Activated B cell treated with CpG ODN at 0.5 μM for 24 hours (primary cell): ENCODE measurements at regions of chr10 and their contacts with region 1.

Region 1: DNA sequence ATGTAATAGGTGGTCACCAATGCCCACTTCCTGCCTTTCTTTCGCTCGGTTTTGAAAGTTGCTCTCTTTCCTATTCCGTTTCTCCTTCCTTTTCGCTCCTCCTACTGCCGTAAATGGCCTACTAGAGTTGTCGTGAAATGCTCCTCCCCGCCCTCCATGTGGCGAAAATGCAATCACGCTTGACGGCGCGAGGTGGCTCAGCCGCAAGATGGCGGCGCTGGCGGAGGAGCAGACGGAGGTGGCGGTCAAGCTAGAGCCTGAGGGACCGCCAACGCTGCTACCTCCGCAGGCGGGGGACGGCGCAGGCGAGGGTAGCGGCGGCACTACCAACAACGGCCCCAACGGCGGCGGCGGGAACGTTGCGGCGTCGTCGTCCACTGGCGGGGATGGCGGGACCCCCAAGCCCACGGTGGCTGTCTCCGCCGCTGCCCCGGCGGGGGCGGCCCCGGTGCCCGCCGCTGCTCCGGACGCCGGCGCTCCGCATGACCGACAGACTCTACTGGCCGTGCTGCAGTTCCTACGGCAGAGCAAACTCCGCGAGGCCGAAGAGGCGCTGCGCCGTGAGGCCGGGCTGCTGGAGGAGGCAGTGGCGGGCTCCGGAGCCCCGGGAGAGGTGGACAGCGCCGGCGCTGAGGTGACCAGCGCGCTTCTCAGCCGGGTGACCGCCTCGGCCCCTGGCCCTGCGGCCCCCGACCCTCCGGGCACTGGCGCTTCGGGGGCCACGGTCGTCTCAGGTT is at the start of gene TAF5:
- DNase-seq: peak; percentile 79
- ATAC-seq: peak; percentile 72
- H3K4me3 Mint-ChIP-seq: peak within 1 kb of the TSS; percentile 90
- H3K27ac Mint-ChIP-seq: peak within 1 kb of the TSS; percentile 87
- H3K4me1 Mint-ChIP-seq: peaks cover 12% of the 10 kb centered on the region
- H3K27me3 Mint-ChIP-seq: no peaks in the 10 kb centered on the region
- CTCF ChIP-seq: no peak
- total RNA-seq, gene TAF5: 3.6 and 3.8 TPM in 2 replicates

Region 2: GRCh38 chr10:102743588-102744373 is 624.2 kb before region 1 on chr10 and contains the start of gene WBP1L:
- CTCF ChIA-PET with region 1: no interaction called
- POLR2A ChIA-PET with region 1: interaction called, 5 read pairs
- intact Hi-C with region 1: loop called (anchors 1 kb)
- DNase-seq: peak; percentile 81
- ATAC-seq: peak; percentile 98
- H3K4me3 Mint-ChIP-seq: peak within 1 kb of the TSS; percentile 93
- H3K27ac Mint-ChIP-seq: peak within 1 kb of the TSS; percentile 87
- H3K4me1 Mint-ChIP-seq: peaks cover 47% of the 10 kb centered on the region
- H3K27me3 Mint-ChIP-seq: no peaks in the 10 kb centered on the region
- CTCF ChIP-seq: no peak
- total RNA-seq, gene WBP1L: 30.5 and 30.8 TPM in 2 replicates

Region 3: DNA sequence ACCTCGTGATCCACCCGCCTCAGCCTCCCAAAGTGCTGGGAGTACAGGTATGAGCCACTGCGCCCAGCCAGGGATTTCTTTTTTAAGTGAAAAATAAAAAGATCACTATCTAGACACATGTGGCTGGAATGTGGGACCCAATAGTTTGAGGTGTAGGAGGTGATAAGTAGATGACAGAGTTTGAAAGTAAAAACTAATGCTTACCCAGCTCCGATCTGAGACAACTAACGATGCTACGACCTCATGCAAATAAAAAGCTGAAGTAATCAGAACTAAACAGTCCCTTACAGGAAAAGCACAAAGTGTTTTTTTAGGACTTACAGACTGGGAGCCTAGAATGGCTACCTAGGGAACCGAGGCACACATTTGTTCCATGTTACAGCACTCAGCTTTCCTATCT is 40.0 kb before region 1 on chr10:
- CTCF ChIA-PET with region 1: no interaction called
- POLR2A ChIA-PET with region 1: no interaction called
- intact Hi-C with region 1: no loop called
- DNase-seq: no peak
- ATAC-seq: no peak
- H3K4me3 Mint-ChIP-seq: no peak overlapping the region
- H3K27ac Mint-ChIP-seq: no peak overlapping the region
- H3K4me1 Mint-ChIP-seq: no peaks in the 10 kb centered on the region
- H3K27me3 Mint-ChIP-seq: no peaks in the 10 kb centered on the region
- CTCF ChIP-seq: no peak

Region 4: DNA sequence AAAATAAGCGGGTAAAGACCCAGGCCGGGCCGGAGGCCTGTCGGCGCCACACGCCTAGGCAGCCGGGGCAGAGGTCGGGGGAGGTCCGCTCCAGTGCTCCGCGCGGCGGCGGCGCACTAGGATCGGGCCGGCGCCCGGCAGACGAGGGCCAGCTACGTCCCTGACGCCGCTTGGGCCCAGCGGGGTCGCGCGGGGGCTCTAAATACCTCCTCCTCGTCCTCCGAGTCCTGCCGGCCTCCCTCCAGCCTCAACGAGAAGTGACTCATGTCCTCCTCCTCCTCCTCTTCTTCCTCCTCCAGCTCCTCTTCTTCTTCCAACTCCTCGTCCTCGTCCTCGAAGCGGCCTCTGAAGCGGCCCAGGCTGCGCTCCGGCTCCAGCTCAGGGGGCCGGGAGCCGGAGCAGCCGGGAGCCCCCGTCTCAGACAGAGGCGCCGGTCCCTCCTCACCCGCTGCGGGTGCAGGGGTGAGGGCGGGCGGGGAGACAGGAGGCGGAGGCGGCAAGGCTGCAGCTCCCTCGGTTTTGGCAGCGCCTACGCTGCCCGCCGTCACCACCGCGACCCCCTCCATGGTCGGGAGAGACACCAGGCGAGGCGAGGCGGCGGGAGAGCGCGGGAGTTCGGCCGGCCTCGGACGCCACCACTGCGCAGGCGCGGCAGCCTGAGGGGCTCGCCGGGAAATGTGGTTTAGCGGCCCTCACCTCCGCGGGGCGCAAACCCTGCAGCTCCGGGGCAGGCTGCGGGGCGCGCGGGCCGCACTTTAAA is 17.3 kb before region 1 on chr10 and contains the start of gene PCGF6:
- CTCF ChIA-PET with region 1: no interaction called
- POLR2A ChIA-PET with region 1: interaction called, 26 read pairs
- intact Hi-C with region 1: loop called (anchors 1 kb)
- DNase-seq: peak; percentile 78
- ATAC-seq: peak; percentile 86
- H3K4me3 Mint-ChIP-seq: peak within 1 kb of the TSS; percentile 92
- H3K27ac Mint-ChIP-seq: peak within 1 kb of the TSS; percentile 82
- H3K4me1 Mint-ChIP-seq: peaks cover 10% of the 10 kb centered on the region
- H3K27me3 Mint-ChIP-seq: no peaks in the 10 kb centered on the region
- CTCF ChIP-seq: no peak
- total RNA-seq, gene PCGF6: 7.3 and 7.6 TPM in 2 replicates

Region 5: DNA sequence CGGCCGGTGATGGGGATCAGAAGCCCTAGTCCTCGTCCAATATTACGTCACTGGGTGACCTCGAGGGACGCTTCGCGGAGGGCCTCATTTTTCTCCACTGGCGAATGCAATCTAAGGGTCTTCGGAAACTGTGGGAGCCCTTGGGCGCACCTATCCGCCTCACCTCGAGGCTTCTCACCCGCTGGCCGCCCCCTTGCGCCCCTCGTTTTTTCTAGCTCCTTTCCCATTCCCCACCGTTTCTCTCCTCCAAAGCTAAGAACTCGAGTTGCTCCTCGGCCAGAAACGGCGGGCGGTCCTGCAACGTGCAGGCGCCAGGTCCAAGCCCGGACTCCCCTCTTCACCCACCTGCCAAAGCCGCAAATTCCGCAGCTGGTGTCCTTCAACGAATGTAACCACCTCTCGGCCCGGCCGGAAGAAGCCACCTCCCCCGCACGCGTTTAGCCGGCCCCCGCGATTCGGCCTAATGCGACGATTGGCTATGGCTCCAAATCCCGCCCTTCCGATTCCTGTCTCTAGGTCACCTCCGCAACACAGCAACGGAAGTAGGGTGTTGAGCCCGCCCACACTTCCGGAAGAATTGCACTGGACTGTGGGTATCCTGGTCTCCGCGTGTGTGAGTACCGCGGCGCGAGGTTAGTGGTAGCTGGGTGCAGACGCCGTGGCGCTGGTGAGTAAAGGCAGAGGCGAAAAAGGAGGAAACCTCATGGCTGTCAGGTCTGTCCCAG is 28.3 kb after region 1 on chr10 and contains the starts of genes ATP5MK and PDCD11:
- CTCF ChIA-PET with region 1: no interaction called
- POLR2A ChIA-PET with region 1: interaction called, 16 read pairs
- intact Hi-C with region 1: loop called (anchors 1 kb)
- DNase-seq: peak; percentile 88
- ATAC-seq: peak; percentile 98
- H3K4me3 Mint-ChIP-seq: peak within 1 kb of the TSS; percentile 98
- H3K27ac Mint-ChIP-seq: peak within 1 kb of the TSS; percentile 91
- H3K4me1 Mint-ChIP-seq: peaks cover 47% of the 10 kb centered on the region
- H3K27me3 Mint-ChIP-seq: no peaks in the 10 kb centered on the region
- CTCF ChIP-seq: no peak
- total RNA-seq, gene ATP5MK: 208 and 223 TPM in 2 replicates
- total RNA-seq, gene PDCD11: 65.4 and 66.0 TPM in 2 replicates